ENCODE measurements at regions of chr6 and their contacts with region 1.

Region 1: DNA sequence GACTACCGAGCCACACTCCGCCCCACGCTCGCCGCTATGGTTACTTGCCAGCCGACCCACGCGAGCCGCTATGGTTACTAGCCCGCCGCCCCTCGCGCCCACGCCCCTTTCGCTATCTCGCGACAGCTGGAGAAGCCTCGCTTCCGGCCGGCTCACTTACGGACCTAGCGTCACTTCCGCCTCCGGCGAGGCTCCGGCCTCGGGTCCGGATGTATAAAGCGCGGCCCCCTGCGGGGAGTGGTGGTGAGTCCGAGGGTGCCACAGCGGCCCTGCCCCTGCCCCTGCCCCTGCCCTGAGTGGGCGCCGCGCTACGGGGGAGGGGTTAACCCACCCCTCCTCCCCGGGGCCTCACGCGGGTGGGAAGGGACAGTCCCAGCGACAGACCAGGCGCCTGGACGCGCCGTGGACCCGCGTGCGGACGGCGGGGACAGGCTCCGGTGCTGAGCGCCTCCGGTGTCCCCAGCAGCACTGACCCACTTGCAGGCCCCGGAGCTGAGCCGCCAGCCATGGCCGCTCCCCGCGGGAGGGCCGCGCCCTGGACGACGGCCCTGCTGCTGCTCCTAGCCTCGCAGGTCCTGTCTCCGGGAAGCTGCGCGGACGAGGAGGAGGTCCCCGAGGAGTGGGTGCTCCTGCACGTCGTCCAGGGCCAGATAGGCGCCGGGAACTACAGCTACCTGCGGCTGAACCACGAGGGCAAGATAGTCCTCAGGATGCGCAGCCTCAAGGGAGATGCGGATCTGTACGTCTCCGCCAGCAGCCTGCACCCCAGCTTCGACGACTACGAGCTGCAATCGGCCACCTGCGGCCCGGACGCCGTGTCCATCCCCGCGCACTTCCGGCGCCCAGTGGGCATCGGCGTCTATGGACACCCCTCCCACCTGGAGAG is at the starts of genes C6orf120 and WDR27:
- DNase-seq: peak; percentile 94 to 97
- ATAC-seq: peak; percentile 83 to 92 (median 87)
- H3K4me3 ChIP-seq: peak within 1 kb of the TSS; percentile 76
- H3K4me3 Mint-ChIP-seq: peak within 1 kb of the TSS; percentile 92
- H3K27ac ChIP-seq: peak within 1 kb of the TSS; percentile 84
- H3K27ac Mint-ChIP-seq: peak within 1 kb of the TSS; percentile 91 to 94
- H3K4me1 ChIP-seq: peaks cover 11% of the 10 kb centered on the region
- H3K4me1 Mint-ChIP-seq: peaks cover 20 to 47% of the 10 kb centered on the region in 2 donors
- H3K27me3 ChIP-seq: no peaks in the 10 kb centered on the region
- H3K27me3 Mint-ChIP-seq: no peaks in the 10 kb centered on the region
- CTCF ChIP-seq: no peak
- total RNA-seq, gene C6orf120: 13.9 to 17.3 (median 16.6) TPM
- total RNA-seq, gene WDR27: 12.7 to 31.0 (median 25.3) TPM

Region 2: GRCh38 chr6:168877821-168878282 is 824.3 kb before region 1 on chr6:
- intact Hi-C with region 1: loop called (anchors 10 kb)
- DNase-seq: peak; percentile 19 to 53
- ATAC-seq: peak; percentile 82 to 93 (median 89)
- H3K4me3 ChIP-seq: no peak overlapping the region
- H3K4me3 Mint-ChIP-seq: peak overlapping the region; percentile 78
- H3K27ac ChIP-seq: peak overlapping the region; percentile 90
- H3K27ac Mint-ChIP-seq: peak overlapping the region; percentile 92 to 94
- H3K4me1 ChIP-seq: peaks cover 38% of the 10 kb centered on the region
- H3K4me1 Mint-ChIP-seq: peaks cover 67% of the 10 kb centered on the region in 2 donors
- H3K27me3 ChIP-seq: no peaks in the 10 kb centered on the region
- H3K27me3 Mint-ChIP-seq: peaks cover 0 to 3% of the 10 kb centered on the region in 2 donors
- CTCF ChIP-seq: no peak

Region 3: GRCh38 chr6:169654598-169655391 is 47.4 kb before region 1 on chr6:
- intact Hi-C with region 1: loop called (anchors 1 kb)
- DNase-seq: peak; percentile 70 to 87
- ATAC-seq: peak; percentile 91 to 97 (median 95)
- H3K4me3 ChIP-seq: peak overlapping the region; percentile 45
- H3K4me3 Mint-ChIP-seq: peak overlapping the region; percentile 89
- H3K27ac ChIP-seq: peak overlapping the region; percentile 76
- H3K27ac Mint-ChIP-seq: peak overlapping the region; percentile 90 to 95
- H3K4me1 ChIP-seq: peaks cover 10% of the 10 kb centered on the region
- H3K4me1 Mint-ChIP-seq: peaks cover 11 to 16% of the 10 kb centered on the region in 2 donors
- H3K27me3 ChIP-seq: no peaks in the 10 kb centered on the region
- H3K27me3 Mint-ChIP-seq: no peaks in the 10 kb centered on the region
- CTCF ChIP-seq: no peak

Region 4: DNA sequence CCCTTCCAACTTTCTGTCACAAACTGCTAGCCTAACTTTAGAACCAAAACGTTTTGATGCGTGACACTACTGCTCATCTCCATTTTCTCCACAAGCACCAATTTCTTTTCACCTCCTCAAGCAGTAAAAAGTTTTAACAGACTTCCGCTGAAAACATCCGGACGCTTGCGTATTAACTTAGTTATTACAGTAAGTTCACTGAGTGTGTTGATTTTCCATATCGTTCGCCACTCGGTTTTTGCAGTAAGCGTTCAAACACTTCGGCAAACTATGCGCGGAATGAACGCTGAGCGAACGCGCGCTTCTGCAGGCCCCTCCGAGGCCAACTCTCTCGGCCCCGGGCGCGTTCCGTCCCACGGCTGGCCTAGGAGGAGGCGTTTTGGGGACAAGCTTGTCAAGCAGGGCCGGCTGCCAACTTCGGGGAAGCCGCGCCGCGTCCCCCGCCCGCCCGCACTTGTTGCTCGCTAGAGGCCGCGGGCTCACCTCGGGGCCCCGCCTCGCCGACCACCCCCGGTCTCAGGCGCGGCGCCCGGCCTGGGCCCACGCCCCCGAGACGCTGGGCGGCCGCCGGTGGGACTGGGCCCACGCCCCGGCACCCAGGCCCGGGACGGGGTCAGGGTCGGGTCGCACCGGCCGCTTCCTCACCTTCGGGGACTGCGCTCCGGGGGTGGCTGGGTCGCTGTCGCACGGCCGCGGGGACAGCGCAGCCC is 21.2 kb after region 1 on chr6:
- intact Hi-C with region 1: loop called (anchors 1 kb)
- DNase-seq: peak; percentile 59 to 80
- ATAC-seq: peak; percentile 42 to 55 (median 52)
- H3K4me3 ChIP-seq: peak overlapping the region; percentile 74
- H3K4me3 Mint-ChIP-seq: peak overlapping the region; percentile 93
- H3K27ac ChIP-seq: peak overlapping the region; percentile 67
- H3K27ac Mint-ChIP-seq: peak overlapping the region; percentile 86 to 93
- H3K4me1 ChIP-seq: peaks cover 16% of the 10 kb centered on the region
- H3K4me1 Mint-ChIP-seq: peaks cover 12 to 16% of the 10 kb centered on the region in 2 donors
- H3K27me3 ChIP-seq: no peaks in the 10 kb centered on the region
- H3K27me3 Mint-ChIP-seq: no peaks in the 10 kb centered on the region
- CTCF ChIP-seq: no peak

Region 5: DNA sequence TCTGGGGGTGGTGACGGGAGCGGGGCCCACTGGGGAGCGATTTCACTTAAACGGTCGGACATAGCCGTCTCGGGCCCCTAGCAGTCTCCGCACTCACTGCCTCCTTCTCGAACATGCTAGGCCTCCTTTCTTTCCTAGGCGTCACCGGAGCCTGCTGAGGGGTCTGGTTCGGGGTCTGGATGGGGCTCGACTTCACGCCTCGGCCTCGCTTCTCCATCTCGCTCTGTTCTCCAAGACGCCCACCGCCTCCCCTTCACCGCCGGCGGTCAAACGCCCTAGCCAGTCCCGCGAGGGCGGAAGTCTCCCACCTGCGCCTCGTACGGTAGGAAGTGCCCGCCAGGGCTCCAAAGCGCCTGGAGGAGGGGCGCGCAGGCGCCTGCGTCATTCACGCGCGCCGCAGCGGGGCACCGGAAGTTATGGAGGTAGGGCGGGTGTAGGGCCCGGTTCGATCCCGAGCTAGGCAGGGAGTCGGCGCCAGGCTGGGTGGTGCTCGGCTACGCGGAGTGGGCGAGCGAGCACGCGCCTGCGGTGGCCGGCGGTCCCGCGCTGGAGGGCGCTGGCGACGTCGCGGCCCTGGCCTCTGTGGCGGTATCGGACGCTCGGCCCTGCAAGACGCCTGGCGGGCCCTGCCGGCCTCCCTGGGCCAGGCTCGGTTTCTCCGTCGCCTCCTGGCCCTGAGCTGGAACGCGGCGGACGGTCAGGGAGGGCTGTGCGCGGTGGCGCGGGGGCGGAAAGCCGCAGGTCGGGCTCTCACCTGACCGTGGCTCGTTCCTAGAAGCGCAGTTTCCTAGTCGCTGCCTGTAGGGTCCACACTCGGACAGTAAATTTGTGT is 49.3 kb after region 1 on chr6 and contains the starts of genes DYNLT2 and ERMARD:
- intact Hi-C with region 1: loop called (anchors 1 kb)
- DNase-seq: peak; percentile 95 to 96
- ATAC-seq: peak; percentile 93 to 99 (median 96)
- H3K4me3 ChIP-seq: peak within 1 kb of the TSS; percentile 79
- H3K4me3 Mint-ChIP-seq: peak within 1 kb of the TSS; percentile 98
- H3K27ac ChIP-seq: peak within 1 kb of the TSS; percentile 94
- H3K27ac Mint-ChIP-seq: peak within 1 kb of the TSS; percentile 99 to 100
- H3K4me1 ChIP-seq: peaks cover 8% of the 10 kb centered on the region
- H3K4me1 Mint-ChIP-seq: peaks cover 38 to 42% of the 10 kb centered on the region in 2 donors
- H3K27me3 ChIP-seq: no peaks in the 10 kb centered on the region
- H3K27me3 Mint-ChIP-seq: peaks cover 0 to 1% of the 10 kb centered on the region in 2 donors
- CTCF ChIP-seq: no peak
- total RNA-seq, gene DYNLT2: 4.0 to 6.8 (median 5.3) TPM
- total RNA-seq, gene ERMARD: 33.9 to 42.2 (median 36.4) TPM

Region 6: GRCh38 chr6:170554013-170554795 is 852.0 kb after region 1 on chr6 and contains the start of gene TBP:
- intact Hi-C with region 1: loop called (anchors 5 kb)
- DNase-seq: peak; percentile 98 to 99
- ATAC-seq: peak; percentile 88 to 97 (median 92)
- H3K4me3 ChIP-seq: peak within 1 kb of the TSS; percentile 84
- H3K4me3 Mint-ChIP-seq: no peak within 1 kb of the TSS
- H3K27ac ChIP-seq: peak within 1 kb of the TSS; percentile 93
- H3K27ac Mint-ChIP-seq: no peak within 1 kb of the TSS
- H3K4me1 ChIP-seq: peaks cover 22% of the 10 kb centered on the region
- H3K4me1 Mint-ChIP-seq: peaks cover 5 to 31% of the 10 kb centered on the region in 2 donors
- H3K27me3 ChIP-seq: no peaks in the 10 kb centered on the region
- H3K27me3 Mint-ChIP-seq: no peaks in the 10 kb centered on the region
- CTCF ChIP-seq: no peak
- total RNA-seq, gene TBP: 13.0 to 18.4 (median 14.2) TPM

Region 7: GRCh38 chr6:170584181-170584953 is 882.2 kb after region 1 on chr6 and contains the start of gene PDCD2:
- intact Hi-C with region 1: loop called (anchors 1 kb)
- DNase-seq: peak; percentile 80 to 96
- ATAC-seq: peak; percentile 92 to 98 (median 94)
- H3K4me3 ChIP-seq: peak within 1 kb of the TSS; percentile 75
- H3K4me3 Mint-ChIP-seq: peak within 1 kb of the TSS; percentile 97
- H3K27ac ChIP-seq: peak within 1 kb of the TSS; percentile 87
- H3K27ac Mint-ChIP-seq: peak within 1 kb of the TSS; percentile 95 to 97
- H3K4me1 ChIP-seq: peaks cover 13% of the 10 kb centered on the region
- H3K4me1 Mint-ChIP-seq: peaks cover 32 to 37% of the 10 kb centered on the region in 2 donors
- H3K27me3 ChIP-seq: no peaks in the 10 kb centered on the region
- H3K27me3 Mint-ChIP-seq: peaks cover 3 to 16% of the 10 kb centered on the region in 2 donors
- CTCF ChIP-seq: no peak
- total RNA-seq, gene PDCD2: 40.4 to 58.4 (median 42.2) TPM

Measured in natural killer cell (primary cell).